GM12878 (cell line): ENCODE measurements at regions of chr14 and their contacts with region 1.

Region 1: GRCh38 chr14:97970222-97970621 is 1173.0 kb downstream of the VRK1 start:
- DNase-seq: no peak
- ATAC-seq: no peak
- H3K4me3 ChIP-seq: no peak overlapping the region
- H3K27ac ChIP-seq: no peak overlapping the region
- H3K4me1 ChIP-seq: no peaks in the 10 kb centered on the region
- H3K27me3 ChIP-seq: no peaks in the 10 kb centered on the region
- CTCF ChIP-seq: no peak
- EP300 ChIP-seq: no peak
- POLR2A ChIP-seq: no peak
- RAD21 ChIP-seq: no peak

Region 2: DNA sequence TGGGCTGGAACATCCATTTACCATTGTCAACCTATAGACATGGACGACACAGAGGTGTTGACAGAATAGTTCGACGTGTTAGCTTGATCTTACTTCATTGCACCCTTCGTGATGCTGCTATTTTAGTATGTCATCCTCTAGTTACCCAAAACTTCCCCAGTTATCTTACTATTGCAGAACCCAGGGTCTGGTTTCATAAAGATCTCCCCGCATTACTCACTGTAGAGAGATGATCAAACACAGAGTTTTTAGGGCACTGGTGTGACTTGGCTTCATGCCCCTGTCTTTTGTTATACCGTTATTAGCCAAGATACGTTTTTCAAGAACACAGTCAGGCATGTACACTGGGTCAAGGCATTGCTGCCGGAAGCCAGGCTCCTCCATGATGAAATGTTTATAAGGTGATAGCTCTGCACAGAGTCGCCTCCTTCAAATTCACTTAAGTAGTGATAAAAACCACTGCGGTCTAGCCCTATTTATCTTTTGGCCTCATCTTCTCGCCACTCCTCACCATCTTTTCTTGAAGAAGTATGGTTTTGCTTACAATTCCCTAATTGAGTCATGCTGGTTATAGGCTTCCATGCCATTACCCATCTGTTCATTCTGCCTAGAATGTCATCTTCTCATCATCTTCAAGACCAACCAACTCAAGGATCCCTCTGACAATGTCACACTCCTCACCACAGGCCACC is 45.2 kb before region 1 on chr14:
- CTCF ChIA-PET with region 1: no interaction called
- POLR2A ChIA-PET with region 1: no interaction called
- RAD21 ChIA-PET with region 1: no interaction called
- SMC1A ChIA-PET with region 1: no interaction called
- in situ Hi-C with region 1: no loop called
- intact Hi-C with region 1: loop called (anchors 5 kb)
- DNase-seq: no peak
- ATAC-seq: no peak
- H3K4me3 ChIP-seq: no peak overlapping the region
- H3K27ac ChIP-seq: no peak overlapping the region
- H3K4me1 ChIP-seq: no peaks in the 10 kb centered on the region
- H3K27me3 ChIP-seq: no peaks in the 10 kb centered on the region
- CTCF ChIP-seq: no peak
- EP300 ChIP-seq: no peak
- POLR2A ChIP-seq: no peak
- RAD21 ChIP-seq: no peak